ENCODE measurements at regions of chr2 and their contacts with region 1.

Region 1: DNA sequence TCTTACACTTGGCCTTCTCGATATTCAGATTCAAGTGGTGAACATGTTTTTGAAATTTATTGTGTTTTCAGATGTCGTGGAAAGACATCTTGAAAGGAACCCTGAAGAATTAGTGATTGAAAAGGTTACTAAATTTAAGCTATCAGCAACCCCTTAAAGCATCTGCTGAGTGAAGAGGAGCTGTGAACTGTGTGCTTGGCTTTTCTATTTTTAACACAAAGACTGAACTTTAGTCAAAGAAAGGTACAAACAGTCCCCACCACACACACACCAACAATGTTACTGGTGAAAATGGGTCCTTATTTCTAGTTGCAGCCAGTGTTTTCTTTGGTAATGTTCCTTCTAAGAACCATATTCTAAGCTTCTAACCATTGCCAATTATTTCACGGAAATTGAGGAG is 95.1 kb downstream of the CYRIA start:
- DNase-seq: no peak
- H3K4me3 ChIP-seq: no peak overlapping the region
- H3K27ac ChIP-seq: no peak overlapping the region
- H3K4me1 ChIP-seq: no peaks in the 10 kb centered on the region
- H3K27me3 ChIP-seq: no peaks in the 10 kb centered on the region
- CTCF ChIP-seq: no peak

Region 2: GRCh38 chr2:16394072-16394985 is 176.2 kb before region 1 on chr2:
- CTCF ChIA-PET with region 1: no interaction called
- dilution Hi-C with region 1: no loop called
- in situ Hi-C with region 1: no loop called
- intact Hi-C with region 1: no loop called
- DNase-seq: no peak
- H3K4me3 ChIP-seq: no peak overlapping the region
- H3K27ac ChIP-seq: no peak overlapping the region
- H3K4me1 ChIP-seq: no peaks in the 10 kb centered on the region
- H3K27me3 ChIP-seq: no peaks in the 10 kb centered on the region
- CTCF ChIP-seq: no peak

Region 3: GRCh38 chr2:17235167-17235566 is 664.7 kb after region 1 on chr2:
- CTCF ChIA-PET with region 1: interaction called, 10 read pairs
- dilution Hi-C with region 1: no loop called
- in situ Hi-C with region 1: no loop called
- intact Hi-C with region 1: no loop called
- DNase-seq: no peak
- H3K4me3 ChIP-seq: no peak overlapping the region
- H3K27ac ChIP-seq: no peak overlapping the region
- H3K4me1 ChIP-seq: no peaks in the 10 kb centered on the region
- H3K27me3 ChIP-seq: no peaks in the 10 kb centered on the region
- CTCF ChIP-seq: no peak